Caco-2 (cell line): ENCODE measurements at regions of chr6 and their contacts with region 1.

Region 1: GRCh38 chr6:25927756-25928216 is 2.7 kb downstream of the SLC17A2 start:
- DNase-seq: no peak
- H3K4me3 ChIP-seq: no peak overlapping the region
- H3K4me3 Mint-ChIP-seq: no peak overlapping the region
- H3K27ac Mint-ChIP-seq: no peak overlapping the region
- H3K4me1 ChIP-seq: peaks cover 11% of the 10 kb centered on the region
- H3K4me1 Mint-ChIP-seq: peaks cover 6% of the 10 kb centered on the region
- H3K27me3 ChIP-seq: no peaks in the 10 kb centered on the region
- H3K27me3 Mint-ChIP-seq: no peaks in the 10 kb centered on the region
- CTCF ChIP-seq: no peak

Region 2: GRCh38 chr6:25851961-25852360 is 75.8 kb before region 1 on chr6:
- CTCF ChIA-PET with region 1: no interaction called
- POLR2A ChIA-PET with region 1: no interaction called
- intact Hi-C with region 1: no loop called
- DNase-seq: no peak
- H3K4me3 ChIP-seq: no peak overlapping the region
- H3K4me3 Mint-ChIP-seq: no peak overlapping the region
- H3K27ac Mint-ChIP-seq: no peak overlapping the region
- H3K4me1 ChIP-seq: no peaks in the 10 kb centered on the region
- H3K4me1 Mint-ChIP-seq: no peaks in the 10 kb centered on the region
- H3K27me3 ChIP-seq: no peaks in the 10 kb centered on the region
- H3K27me3 Mint-ChIP-seq: peaks cover 7% of the 10 kb centered on the region
- CTCF ChIP-seq: no peak

Region 3: GRCh38 chr6:25907475-25908014 is 20.2 kb before region 1 on chr6:
- CTCF ChIA-PET with region 1: no interaction called
- POLR2A ChIA-PET with region 1: no interaction called
- intact Hi-C with region 1: loop called (anchors 2 kb)
- DNase-seq: no peak
- H3K4me3 ChIP-seq: no peak overlapping the region
- H3K4me3 Mint-ChIP-seq: no peak overlapping the region
- H3K27ac Mint-ChIP-seq: no peak overlapping the region
- H3K4me1 ChIP-seq: no peaks in the 10 kb centered on the region
- H3K4me1 Mint-ChIP-seq: peaks cover 12% of the 10 kb centered on the region
- H3K27me3 ChIP-seq: no peaks in the 10 kb centered on the region
- H3K27me3 Mint-ChIP-seq: no peaks in the 10 kb centered on the region
- CTCF ChIP-seq: no peak

Region 4: DNA sequence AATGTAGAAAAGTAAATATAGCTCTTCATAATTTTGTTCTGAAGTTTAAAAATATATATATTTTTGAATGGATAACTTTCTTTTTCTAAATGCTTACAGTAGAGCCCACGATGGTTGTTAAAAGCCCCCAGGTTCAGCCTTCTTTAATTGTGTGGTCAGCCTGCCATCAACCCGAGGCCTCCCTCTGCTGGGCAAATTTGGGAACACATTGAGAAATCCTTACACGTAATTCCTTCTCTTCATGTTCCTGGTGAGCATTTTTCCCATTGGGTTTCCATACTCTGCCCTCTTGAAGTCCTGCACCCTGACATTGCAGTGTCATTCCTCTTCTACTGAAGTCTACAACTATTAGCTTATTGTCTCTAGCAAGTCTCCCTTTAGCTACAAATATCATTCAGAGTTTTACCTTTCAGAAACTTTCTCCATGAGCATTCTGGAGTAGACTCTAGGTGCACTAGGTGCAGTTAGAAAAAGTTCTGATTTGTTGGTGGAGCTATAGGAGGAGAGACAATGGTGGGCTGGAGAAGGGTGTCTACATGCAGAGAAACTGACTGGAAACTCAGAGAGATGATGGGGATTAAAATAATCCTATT is 75.4 kb after region 1 on chr6:
- CTCF ChIA-PET with region 1: no interaction called
- POLR2A ChIA-PET with region 1: no interaction called
- intact Hi-C with region 1: no loop called
- DNase-seq: peak; percentile 49 to 79
- H3K4me3 ChIP-seq: no peak overlapping the region
- H3K4me3 Mint-ChIP-seq: no peak overlapping the region
- H3K27ac Mint-ChIP-seq: no peak overlapping the region
- H3K4me1 ChIP-seq: no peaks in the 10 kb centered on the region
- H3K4me1 Mint-ChIP-seq: peaks cover 13% of the 10 kb centered on the region
- H3K27me3 ChIP-seq: no peaks in the 10 kb centered on the region
- H3K27me3 Mint-ChIP-seq: no peaks in the 10 kb centered on the region
- CTCF ChIP-seq: peak; percentile 77 to 90

Region 5: DNA sequence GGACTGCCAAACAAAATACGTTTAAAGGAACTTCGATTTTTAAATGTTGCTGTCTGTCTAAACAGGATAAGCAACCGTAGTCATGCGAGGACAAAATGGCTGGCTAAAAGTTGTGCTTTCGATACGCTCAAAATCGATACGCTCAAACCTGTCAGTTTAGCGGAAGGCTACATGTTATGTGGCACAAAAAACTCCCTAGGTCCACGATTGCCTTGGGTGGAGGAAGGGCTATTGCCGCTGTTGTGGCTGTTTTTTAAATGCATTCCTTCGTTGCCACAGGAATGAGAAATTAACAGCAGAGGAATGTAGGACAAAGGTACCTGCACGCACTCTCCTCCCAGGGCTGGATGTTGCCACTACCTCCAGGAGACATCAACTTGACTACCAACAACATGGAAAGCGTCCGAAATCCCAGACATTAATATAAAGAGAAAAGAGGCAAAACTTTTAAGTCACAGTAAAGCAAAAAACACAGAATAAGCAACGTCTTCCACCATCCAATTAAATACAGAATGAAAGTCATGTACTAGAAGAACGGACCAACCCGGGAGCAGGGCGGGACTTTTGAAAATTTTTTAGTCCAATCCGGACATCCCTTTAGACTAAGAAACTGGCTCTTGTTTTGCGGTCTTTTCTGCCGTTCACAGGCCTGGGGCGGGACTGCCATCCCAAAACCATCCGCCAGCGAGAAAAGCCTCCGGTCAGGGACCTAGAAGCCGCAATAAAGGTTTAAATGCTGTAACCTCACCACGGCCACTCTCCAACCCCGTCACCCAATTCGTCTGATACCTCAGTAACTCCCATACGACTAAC is 127.3 kb after region 1 on chr6:
- CTCF ChIA-PET with region 1: no interaction called
- POLR2A ChIA-PET with region 1: no interaction called
- intact Hi-C with region 1: no loop called
- DNase-seq: peak; percentile 87 to 90
- H3K4me3 ChIP-seq: peak overlapping the region; percentile 64
- H3K4me3 Mint-ChIP-seq: peak overlapping the region; percentile 83
- H3K27ac Mint-ChIP-seq: peak overlapping the region; percentile 93
- H3K4me1 ChIP-seq: peaks cover 8% of the 10 kb centered on the region
- H3K4me1 Mint-ChIP-seq: peaks cover 6% of the 10 kb centered on the region
- H3K27me3 ChIP-seq: no peaks in the 10 kb centered on the region
- H3K27me3 Mint-ChIP-seq: no peaks in the 10 kb centered on the region
- CTCF ChIP-seq: peak in 1 of 2 experiments; percentile 14